ENCODE measurements at regions of chr20 and their contacts with region 1.

Region 1: DNA sequence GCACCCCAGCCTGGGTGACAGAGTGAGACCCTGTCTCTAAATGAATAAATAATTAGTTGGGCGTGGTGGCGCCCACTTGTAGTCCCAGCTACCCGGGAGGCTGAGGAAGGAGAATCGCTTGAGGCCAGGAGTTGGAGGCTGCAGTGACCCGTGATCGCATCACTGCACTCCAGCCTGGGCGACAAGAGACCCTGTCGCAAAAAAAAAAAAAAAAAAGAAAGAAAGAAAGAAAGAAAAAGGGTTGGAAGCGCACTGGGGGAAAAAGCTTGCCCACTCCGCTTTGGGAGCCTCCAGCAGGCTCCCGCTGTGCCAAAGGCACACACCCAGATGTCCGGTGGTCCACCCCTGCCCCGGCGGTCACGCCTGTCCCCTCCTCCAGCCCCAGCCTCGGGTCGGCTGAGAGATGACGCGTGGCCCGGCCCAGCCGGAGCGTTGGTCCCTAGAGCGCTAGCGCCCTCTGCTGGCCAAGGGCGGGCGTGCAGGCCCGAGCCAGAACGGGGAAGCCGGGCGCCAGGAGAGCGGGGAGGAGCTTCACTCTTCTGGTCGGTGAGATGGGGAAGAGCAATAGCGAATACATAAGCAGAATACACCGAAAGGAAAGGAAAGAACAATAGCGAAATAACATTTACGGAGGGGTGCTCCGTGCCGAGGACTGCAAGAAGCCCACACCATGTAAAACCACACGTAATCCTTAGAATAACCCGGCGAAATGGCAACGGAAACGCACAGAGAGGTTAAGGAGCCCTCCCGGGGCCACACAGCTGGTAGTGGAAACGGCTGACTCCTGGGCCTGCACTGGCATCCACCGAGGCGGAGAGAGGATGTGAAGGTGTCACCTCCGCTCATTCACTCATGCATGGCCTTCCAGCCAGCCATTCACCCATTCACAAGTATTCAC is 41.7 kb downstream of the UBE2V1 start:
- DNase-seq: peak; percentile 92
- H3K4me3 Mint-ChIP-seq: peak overlapping the region; percentile 44
- H3K27ac Mint-ChIP-seq: no peak overlapping the region
- H3K4me1 Mint-ChIP-seq: peaks cover 6% of the 10 kb centered on the region
- H3K27me3 Mint-ChIP-seq: peaks cover 21% of the 10 kb centered on the region

Region 2: DNA sequence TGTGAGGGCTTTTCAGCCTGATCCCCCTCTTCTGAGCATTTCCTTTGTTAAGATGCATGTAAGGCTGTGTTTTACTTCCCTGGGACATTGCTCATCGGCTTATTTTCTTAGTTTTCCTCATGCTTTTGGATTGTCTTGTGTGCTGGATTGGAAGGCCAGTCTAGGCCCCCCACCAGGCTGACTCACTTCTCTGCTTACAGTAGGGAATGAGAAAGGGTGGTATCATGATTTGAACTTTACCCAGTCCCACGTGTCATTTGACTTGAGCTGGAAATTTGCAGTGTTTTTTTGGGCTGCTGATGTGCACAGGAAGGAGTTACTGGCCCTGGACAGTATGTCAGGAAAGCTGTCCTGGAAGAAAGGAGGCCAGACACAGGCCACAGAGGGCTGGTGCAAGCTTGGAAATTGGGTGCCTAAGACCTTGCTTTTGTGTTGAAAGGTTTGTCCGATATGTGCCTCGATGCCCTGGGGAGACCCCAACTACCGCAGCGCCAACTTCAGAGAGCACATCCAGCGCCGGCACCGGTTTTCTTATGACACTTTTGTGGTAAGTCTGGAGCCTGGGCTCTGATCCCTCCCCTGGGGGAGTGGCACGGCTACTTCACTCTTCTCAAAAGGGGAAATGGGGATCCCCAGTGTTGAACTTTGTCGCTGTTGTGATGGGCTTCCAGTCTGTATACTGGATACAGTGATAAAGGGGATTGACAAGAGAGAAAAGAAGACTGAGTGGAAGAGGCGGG is 122.3 kb before region 1 on chr20:
- CTCF ChIA-PET with region 1: interaction called, 10 read pairs
- DNase-seq: peak; percentile 12
- H3K4me3 Mint-ChIP-seq: no peak overlapping the region
- H3K27ac Mint-ChIP-seq: peak overlapping the region; percentile 49
- H3K4me1 Mint-ChIP-seq: peaks cover 2% of the 10 kb centered on the region
- H3K27me3 Mint-ChIP-seq: no peaks in the 10 kb centered on the region

Region 3: DNA sequence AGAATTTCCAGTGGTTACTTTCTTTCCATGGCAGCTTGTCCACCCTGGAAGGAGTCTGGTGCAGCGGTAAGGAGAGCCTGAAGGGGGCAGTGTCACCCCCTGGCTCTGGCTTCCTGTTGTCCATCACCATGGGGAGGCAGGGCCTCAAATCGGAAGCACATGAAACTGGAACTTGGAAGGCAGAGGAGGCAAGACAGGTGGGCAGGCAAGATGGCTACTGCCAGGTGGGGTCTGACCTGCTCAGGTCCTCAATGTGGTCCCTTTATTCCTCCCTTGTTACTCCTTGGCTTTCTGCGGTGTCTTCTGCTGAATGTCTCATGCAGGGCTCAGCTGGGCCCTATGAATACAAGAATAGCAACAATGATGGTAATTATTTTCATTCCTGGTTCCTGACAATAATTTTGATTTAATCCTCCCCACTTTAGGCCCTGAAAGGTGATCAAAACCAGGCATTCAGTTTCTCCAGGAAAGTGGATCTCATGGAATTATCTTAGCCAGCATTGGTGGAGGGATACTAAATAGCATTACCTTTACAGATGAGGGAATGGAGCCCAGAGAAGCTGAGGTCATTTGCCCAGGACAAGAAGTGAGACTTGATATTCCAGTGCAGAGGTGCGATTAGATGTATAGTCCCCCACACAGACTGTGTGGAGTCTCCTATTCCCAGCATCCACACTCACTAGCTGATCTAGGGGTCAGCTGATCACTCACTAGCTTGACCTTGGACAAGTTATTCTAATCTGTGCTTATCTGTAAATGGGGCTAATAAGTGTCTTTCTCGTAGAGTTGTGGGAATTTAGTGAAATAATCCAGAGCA is 106.1 kb before region 1 on chr20:
- CTCF ChIA-PET with region 1: interaction called, 31 read pairs
- DNase-seq: peak; percentile 43
- H3K4me3 Mint-ChIP-seq: no peak overlapping the region
- H3K27ac Mint-ChIP-seq: no peak overlapping the region
- H3K4me1 Mint-ChIP-seq: no peaks in the 10 kb centered on the region
- H3K27me3 Mint-ChIP-seq: no peaks in the 10 kb centered on the region

Region 4: GRCh38 chr20:50038574-50039012 is 32.6 kb before region 1 on chr20:
- CTCF ChIA-PET with region 1: no interaction called
- DNase-seq: no peak
- H3K4me3 Mint-ChIP-seq: no peak overlapping the region
- H3K27ac Mint-ChIP-seq: no peak overlapping the region
- H3K4me1 Mint-ChIP-seq: no peaks in the 10 kb centered on the region
- H3K27me3 Mint-ChIP-seq: peaks cover 27% of the 10 kb centered on the region

Region 5: DNA sequence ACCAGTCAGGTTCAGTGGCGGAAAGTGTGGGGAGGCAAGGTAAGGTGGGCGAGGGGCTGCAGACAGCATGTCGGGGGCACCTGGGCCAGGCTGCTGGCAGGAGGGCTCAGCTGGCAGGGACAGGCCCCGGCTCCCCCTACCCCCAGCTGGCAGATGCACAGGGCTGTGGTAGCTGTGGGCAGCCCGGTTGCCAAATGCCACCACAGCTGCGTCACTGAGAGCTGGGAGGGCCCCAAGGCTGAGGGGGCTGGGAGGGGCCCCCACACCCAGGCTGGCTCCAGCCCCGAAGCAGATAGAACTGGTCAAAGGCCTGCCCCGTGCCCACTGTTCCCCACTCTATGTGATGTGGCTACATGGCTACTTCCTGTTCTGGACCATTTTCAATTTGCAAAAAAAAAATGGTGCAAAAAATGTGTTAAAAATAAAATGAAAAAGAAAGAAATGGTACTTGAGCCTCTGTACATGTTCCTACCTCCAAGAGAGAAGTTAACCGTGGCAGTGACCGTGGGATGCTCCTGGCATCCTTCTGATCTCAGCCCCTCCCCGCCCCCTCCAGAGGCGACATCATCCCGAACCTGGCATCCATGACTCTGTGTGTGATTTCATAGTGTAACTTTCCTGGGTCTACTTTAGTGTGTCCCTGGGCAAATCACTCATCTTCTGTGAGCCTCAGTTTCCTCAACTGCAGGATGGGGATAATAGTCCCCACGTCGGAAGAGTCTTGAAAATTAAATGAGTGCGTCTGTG is 22.6 kb before region 1 on chr20:
- CTCF ChIA-PET with region 1: interaction called, 11 read pairs
- DNase-seq: no peak
- H3K4me3 Mint-ChIP-seq: no peak overlapping the region
- H3K27ac Mint-ChIP-seq: no peak overlapping the region
- H3K4me1 Mint-ChIP-seq: peaks cover 14% of the 10 kb centered on the region
- H3K27me3 Mint-ChIP-seq: peaks cover 71% of the 10 kb centered on the region

Region 6: DNA sequence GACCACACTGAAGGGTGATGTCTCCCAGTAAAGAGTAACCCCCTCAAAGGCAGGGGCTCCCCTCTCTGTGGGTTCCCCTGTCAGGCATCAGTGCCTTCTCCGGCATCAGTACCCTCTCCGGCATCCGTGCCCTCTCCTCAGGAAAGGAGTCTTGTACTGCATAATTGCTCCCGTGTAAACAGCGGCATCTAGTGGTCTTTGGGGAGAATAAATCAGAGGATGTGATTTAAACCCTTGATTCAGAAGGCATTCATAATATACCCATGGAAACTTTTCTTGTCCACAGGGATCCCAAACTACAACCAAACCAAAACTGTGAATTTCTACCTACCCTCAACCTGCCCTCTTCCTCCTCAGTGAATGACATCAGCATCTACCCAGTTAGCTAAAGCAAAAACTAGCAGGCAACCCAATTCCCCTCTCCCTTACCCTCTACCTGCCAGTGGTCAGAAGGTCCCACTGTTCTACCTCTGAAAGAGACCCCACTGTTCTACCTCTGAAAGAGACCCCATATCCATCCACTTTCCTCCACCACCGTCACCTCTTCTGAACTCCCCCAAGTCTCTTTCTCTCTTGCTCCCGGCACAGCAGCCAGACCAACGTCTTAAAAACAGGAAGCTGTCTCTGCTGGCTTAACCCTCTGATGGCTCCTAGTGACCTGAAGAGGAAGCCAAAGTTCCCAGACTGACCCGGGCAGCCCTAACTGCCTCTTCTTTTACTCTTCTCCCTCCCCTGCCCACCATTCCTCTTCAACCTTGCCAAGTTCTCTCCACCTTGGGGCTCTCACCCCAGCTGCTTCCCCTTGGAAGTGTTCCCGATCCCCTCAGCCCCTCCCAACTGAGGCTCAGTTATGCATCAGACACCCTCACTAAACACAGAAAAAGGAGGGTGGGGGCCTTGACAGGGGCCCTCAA is 14.5 kb after region 1 on chr20:
- CTCF ChIA-PET with region 1: interaction called, 41 read pairs
- DNase-seq: peak; percentile 55
- H3K4me3 Mint-ChIP-seq: peak overlapping the region; percentile 53
- H3K27ac Mint-ChIP-seq: peak overlapping the region; percentile 39
- H3K4me1 Mint-ChIP-seq: peaks cover 16% of the 10 kb centered on the region
- H3K27me3 Mint-ChIP-seq: no peaks in the 10 kb centered on the region

Region 7: GRCh38 chr20:50278674-50279531 is 207.7 kb after region 1 on chr20:
- CTCF ChIA-PET with region 1: no interaction called
- DNase-seq: no peak
- H3K4me3 Mint-ChIP-seq: no peak overlapping the region
- H3K27ac Mint-ChIP-seq: no peak overlapping the region
- H3K4me1 Mint-ChIP-seq: no peaks in the 10 kb centered on the region
- H3K27me3 Mint-ChIP-seq: peaks cover 77% of the 10 kb centered on the region

Measured in activated naive CD4-positive, alpha-beta T cell treated with anti-CD3 and anti-CD28 coated beads, Interleukin-2, amount 10 ng/mL, durations not matched to agents 7 days and 5 days (primary cell).